Activated T-helper 2 cell treated with anti-CD3 and anti-CD28 coated beads, Interferon-gamma antibody, Interleukin-2, Interleukin-4, amounts not matched to agents 10 μg/mL and 5 μg/mL and 100 μg/mL, durations not matched to agents 14 hours and 24 hours and 36 hours (primary cell): ENCODE measurements at regions of chr1 and their contacts with region 1.

Region 1: DNA sequence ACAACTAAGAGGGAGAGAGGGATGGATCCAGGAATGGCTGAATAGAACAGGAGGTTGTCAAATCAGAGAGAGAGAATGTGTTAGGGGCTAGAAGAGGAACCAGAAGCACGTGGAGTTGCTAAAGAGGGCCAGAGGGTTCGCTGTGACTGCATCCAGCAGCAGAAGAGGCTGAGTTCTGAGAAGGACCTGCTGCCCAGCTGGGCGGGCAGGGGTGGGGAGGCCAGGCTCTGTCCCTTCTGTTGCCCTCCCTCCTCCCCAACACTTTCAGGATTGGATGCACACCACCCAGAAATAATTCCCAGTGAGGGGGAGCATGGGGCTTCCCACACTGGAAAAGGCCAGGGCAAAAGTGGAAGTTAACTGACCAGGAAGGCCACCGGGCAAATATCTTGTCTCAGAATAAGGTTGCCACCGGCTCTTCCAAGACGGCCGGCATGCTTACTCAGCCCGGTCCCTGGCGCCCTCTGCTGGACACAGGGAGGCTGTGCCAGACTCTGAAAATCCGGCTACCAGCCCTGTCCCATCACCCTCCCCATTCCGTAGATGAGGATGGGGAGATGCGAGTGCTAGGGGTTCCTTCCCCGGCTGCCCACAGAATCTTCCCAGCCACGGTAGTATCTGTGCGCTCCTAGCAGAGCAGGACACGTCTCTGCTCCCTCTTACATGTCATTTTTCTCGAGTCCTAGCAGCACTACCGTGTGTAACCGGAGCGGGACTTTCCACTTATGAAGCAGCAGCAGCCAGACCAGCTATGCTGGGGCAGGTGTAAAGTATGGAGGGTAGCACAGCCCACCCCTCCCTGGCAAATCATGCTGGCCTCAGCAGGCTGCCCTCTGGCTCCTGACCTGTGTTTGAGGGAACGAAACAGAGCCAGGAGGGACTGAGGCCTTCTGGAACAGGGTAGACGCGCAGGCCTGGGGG is 46.8 kb upstream of the A3GALT2 start:
- DNase-seq: peak; percentile 76
- H3K4me3 Mint-ChIP-seq: no peak overlapping the region
- H3K27ac Mint-ChIP-seq: no peak overlapping the region
- H3K4me1 Mint-ChIP-seq: peaks cover 2% of the 10 kb centered on the region
- H3K27me3 Mint-ChIP-seq: no peaks in the 10 kb centered on the region

Region 2: DNA sequence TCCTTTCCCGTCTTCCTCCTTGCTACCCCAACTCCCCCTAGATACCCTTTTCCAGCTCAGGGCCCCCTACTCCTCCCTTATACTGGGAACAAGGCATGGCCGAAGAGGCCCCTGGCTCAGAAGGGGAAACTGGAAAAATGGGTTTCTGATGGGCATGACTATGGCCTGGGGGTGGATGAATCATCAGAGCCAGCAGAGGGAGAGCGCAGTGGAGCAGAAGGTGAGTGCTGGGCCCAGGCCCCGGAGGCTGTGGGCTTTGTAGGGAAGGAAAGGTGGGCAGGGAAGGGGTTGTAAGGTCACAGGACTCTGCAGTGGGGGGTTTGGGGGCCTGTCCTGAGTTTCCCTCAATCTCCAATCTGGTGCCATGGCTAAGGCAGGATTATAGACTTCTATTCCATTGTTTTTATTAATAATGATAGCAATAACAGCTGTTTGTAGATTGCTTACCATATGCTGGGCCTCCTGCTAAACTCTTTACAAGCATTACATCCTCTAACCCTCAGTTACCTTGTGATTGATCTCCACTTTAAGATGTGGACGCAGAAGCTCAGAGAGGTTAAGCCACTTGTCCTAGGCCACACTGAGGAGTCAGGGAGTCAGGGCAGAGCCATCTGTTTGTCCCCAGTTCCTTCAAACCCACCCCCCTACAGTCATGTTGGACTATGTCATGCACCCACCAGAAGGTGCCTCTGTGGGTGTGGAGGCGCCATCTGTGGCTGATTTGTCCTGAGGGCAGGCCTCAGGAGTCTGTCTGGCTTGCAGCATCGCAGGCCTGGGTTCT is 147.7 kb before region 1 on chr1:
- intact Hi-C with region 1: loop called (anchors 5 kb)
- DNase-seq: no peak
- H3K4me3 Mint-ChIP-seq: no peak overlapping the region
- H3K27ac Mint-ChIP-seq: no peak overlapping the region
- H3K4me1 Mint-ChIP-seq: peaks cover 7% of the 10 kb centered on the region
- H3K27me3 Mint-ChIP-seq: peaks cover 2% of the 10 kb centered on the region

Region 3: DNA sequence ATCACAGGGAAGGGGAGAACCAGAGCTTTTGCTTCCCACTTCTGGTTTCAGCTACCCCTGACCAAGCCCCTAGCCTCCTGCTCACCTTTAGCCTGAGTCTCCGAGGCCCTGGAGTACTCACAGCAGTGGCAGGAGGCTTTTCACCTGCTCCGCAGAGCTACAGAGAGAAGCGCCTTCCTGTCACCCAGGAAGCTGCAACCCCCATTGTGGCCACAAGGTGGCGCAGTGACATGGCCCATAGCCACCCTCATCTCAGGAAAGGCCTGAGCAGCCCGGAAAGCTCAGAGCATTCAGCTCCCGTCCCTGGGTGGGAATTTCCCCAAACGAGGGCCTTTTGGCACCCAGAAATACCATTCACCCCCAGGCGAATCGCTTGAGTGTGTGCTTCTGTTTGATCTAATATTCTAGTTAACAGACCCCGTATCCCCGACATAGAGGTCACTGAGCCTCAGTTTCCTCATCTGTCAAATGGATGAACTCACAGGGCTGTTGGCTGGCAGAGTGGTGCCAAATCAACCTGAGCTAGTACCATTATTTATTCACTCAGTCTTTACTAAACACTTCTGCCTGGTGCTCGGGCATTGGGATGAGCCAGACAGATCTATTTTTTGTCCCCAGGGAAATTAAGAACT is 72.2 kb before region 1 on chr1:
- intact Hi-C with region 1: loop called (anchors 1 kb)
- DNase-seq: peak; percentile 75
- H3K4me3 Mint-ChIP-seq: no peak overlapping the region
- H3K27ac Mint-ChIP-seq: no peak overlapping the region
- H3K4me1 Mint-ChIP-seq: peaks cover 7% of the 10 kb centered on the region
- H3K27me3 Mint-ChIP-seq: no peaks in the 10 kb centered on the region

Region 4: DNA sequence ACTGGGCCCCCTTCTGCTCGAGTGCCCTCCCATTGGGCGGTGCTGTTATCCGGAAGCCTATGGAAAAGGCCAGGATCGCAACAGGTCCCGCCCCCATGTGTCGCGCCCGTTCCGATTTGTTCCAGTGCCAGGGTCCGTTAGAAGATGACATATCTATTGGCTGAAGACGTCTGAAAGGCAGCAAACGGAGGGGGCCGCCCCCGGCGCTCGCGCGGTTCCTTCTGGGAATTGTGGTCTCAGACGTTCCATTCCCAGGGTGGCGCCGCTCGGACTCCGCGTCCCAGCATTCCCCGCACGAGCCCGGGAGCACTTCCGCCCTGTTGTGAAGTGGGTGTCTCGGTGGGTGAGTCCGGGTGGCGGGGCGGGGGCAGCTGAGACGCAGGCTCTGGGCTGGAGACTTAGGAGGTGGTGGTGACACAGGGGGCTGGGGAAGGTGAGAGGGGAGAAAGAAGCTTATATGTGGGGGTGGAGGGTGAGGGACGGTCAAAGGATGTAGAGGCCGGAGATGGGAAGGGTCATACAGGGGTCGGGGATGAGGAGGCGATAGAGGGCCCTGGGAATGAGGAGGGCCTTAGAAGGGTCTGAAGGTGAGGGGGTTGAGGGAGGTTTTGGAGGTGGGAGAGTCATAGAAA is 104.7 kb after region 1 on chr1 and contains the start of gene ZSCAN20:
- intact Hi-C with region 1: loop called (anchors 5 kb)
- DNase-seq: peak; percentile 82
- H3K4me3 Mint-ChIP-seq: peak within 1 kb of the TSS; percentile 81
- H3K27ac Mint-ChIP-seq: peak within 1 kb of the TSS; percentile 43
- H3K4me1 Mint-ChIP-seq: peaks cover 30% of the 10 kb centered on the region
- H3K27me3 Mint-ChIP-seq: no peaks in the 10 kb centered on the region
- total RNA-seq, gene ZSCAN20: 2.6 and 4.1 TPM in 2 replicates